GM10248 (cell line): ENCODE measurements at regions of chr10 and their contacts with region 1.

Region 1: DNA sequence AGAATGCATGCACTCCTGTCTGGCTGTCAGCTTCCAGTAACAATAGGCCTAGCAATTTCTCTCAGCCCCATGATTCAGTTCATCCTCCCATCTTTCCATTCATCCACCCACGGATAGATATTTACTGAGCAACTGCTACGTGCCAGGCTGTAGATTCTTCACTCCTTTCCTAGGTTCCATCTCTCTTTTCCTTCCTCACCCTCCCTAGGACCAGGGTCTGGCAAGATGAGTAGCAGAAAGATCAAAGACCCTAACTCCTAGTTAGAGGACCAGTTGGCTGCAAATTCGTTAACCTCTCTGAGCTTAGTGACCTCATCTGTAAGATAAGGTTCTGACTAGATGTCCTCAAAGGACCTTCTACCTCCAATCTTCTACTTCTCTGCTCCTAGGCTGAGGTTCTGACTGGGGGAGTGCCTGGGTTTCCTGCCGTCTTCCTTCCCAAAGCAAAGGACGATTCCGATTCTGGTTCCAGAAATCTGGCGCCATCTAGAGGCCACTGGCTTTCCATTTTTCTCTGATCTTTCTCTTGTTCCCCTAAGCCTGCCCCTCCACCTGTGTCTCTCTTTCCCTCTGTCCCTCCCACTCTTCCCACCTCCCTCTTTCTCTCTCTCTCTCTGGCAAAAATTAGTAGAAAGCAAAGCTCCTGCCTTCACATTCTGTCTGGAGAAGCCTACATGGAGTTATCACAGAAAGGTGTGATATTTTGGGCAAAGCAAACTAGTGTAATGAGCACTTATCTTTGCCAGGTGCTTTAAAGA is 26.2 kb downstream of the TBATA start:
- DNase-seq: peak; percentile 73
- CTCF ChIP-seq: peak; percentile 64

Region 2: DNA sequence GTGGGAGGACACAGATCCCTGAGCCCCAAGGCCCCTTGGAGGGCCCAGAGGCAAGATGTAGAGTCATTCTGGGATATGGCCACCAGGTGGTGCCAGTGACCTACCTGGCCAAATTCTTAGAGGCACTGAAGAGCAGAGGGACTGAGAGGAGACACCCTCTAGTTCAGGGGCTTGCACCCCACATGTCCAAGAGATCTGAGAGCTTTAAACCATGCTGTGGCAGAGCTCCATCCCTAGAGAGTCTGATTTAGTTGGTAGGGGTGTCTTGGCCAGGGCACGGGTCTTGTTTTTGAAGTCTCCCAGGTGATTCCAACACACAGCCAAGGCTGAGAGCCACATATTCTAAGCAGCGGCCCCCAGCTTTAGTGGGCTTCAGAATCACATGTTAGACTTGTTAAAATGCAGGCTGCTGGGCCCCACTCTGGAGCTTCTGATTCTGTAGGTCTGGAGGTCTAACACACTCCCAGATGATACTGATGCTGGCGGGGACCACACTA is 208.9 kb before region 1 on chr10:
- CTCF ChIA-PET with region 1: interaction called, 93 read pairs
- POLR2A ChIA-PET with region 1: no interaction called
- DNase-seq: peak; percentile 83
- CTCF ChIP-seq: peak; percentile 74

Region 3: GRCh38 chr10:70558871-70559810 is 199.8 kb before region 1 on chr10:
- CTCF ChIA-PET with region 1: interaction called, 19 read pairs
- POLR2A ChIA-PET with region 1: no interaction called
- DNase-seq: peak; percentile 78
- CTCF ChIP-seq: peak; percentile 45

Region 4: DNA sequence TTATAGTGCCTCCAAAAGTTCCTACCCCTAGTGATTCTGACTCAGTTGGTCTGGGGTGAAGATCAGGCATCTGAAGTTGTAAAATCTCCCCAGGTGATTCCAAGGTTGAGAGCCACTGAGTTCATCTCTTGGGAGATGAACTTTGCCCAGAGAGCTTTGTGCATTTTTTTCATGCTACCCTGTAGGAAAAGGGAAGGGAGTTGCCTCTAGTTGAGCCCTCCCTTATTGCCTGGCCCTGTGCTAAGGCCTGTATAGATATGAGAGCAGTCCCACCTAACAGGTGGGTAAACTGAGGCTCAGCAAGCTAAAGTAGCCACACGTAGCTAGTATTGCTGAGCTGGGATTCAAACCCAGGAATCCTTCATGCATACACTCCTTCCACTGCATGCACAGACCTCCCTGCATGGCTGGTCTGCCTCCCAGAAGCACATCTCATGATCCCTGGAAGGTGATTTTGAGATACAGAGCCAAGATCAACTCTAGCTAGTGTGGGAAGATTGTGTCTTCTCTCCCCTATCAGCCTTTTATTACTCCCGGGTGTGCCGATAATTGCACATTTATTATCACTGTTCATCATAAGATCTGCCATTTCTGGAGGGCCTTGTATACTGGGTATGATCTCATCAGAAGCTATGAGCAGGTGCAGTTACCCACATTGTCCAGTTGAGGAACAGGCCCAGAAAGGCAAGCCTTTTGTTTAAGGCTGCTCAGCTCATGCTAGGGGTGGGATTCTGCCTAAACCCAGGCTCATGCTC is 20.8 kb before region 1 on chr10:
- CTCF ChIA-PET with region 1: interaction called, 12 read pairs
- POLR2A ChIA-PET with region 1: no interaction called
- DNase-seq: no peak
- CTCF ChIP-seq: no peak

Region 5: GRCh38 chr10:70786799-70787415 is 28.0 kb after region 1 on chr10:
- CTCF ChIA-PET with region 1: no interaction called
- POLR2A ChIA-PET with region 1: no interaction called
- DNase-seq: no peak
- CTCF ChIP-seq: no peak

Region 6: GRCh38 chr10:70834441-70835151 is 75.7 kb after region 1 on chr10:
- CTCF ChIA-PET with region 1: no interaction called
- POLR2A ChIA-PET with region 1: no interaction called
- DNase-seq: no peak
- CTCF ChIP-seq: no peak